Activated CD4-positive, alpha-beta memory T cell treated with anti-CD3 and anti-CD28 coated beads for 36 hours (primary cell): ENCODE measurements at regions of chr2 and their contacts with region 1.

Region 1: DNA sequence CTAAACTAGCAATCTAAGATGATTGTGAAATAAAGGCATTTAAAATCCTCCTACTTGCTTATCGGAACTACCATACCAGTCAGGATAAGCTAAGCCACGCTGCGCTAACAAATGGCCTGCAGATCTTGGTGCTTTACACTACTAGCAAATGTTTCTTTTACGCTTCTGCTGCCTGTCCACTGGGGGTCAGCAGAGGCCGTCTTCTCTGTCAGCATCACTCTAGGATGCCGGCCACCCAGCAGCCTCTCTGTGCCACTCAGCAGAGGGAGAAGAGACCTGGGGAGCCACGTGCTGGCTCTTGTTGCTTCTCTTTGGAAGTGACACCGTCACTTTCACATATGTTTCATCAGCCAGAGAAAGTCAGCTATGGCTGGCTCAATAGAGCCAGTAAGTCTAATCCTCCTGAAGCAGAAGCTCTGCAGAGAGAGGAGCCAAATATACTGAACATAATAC is 36.6 kb downstream of the COPS8 start:
- DNase-seq: peak; percentile 81
- H3K4me3 Mint-ChIP-seq: no peak overlapping the region
- H3K27ac Mint-ChIP-seq: no peak overlapping the region
- H3K4me1 Mint-ChIP-seq: peaks cover 3% of the 10 kb centered on the region
- H3K27me3 Mint-ChIP-seq: no peaks in the 10 kb centered on the region

Region 2: GRCh38 chr2:237085248-237086221 is 36.7 kb before region 1 on chr2 and contains the start of gene COPS8:
- CTCF ChIA-PET with region 1: no interaction called
- POLR2A ChIA-PET with region 1: no interaction called
- intact Hi-C with region 1: no loop called
- DNase-seq: peak; percentile 94
- H3K4me3 Mint-ChIP-seq: peak within 1 kb of the TSS; percentile 98
- H3K27ac Mint-ChIP-seq: peak within 1 kb of the TSS; percentile 92
- H3K4me1 Mint-ChIP-seq: peaks cover 13% of the 10 kb centered on the region
- H3K27me3 Mint-ChIP-seq: no peaks in the 10 kb centered on the region
- total RNA-seq, gene COPS8: 61.1 to 66.8 TPM

Region 3: DNA sequence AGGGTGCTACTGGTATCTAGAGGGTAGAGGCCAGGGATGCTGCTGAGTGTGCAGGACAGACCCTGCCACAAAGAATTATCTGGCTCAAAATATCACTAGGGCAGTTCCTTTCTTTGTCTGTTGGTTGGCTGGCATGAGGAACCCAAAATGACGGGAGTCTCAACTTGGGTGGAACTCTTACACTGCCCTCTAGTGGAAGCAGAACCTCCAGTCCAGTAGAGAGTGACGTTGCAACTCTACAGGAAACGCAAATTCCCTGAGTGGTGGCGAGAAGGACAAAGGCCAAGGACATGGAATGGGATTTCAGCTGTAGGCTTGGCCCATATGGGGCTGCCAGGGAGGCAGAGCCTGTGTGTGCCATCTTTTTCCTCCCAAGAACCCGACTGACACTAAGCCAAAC is 10.6 kb after region 1 on chr2:
- CTCF ChIA-PET with region 1: interaction called, 14 read pairs
- POLR2A ChIA-PET with region 1: no interaction called
- intact Hi-C with region 1: no loop called
- DNase-seq: no peak
- H3K4me3 Mint-ChIP-seq: no peak overlapping the region
- H3K27ac Mint-ChIP-seq: no peak overlapping the region
- H3K4me1 Mint-ChIP-seq: no peaks in the 10 kb centered on the region
- H3K27me3 Mint-ChIP-seq: no peaks in the 10 kb centered on the region

Region 4: DNA sequence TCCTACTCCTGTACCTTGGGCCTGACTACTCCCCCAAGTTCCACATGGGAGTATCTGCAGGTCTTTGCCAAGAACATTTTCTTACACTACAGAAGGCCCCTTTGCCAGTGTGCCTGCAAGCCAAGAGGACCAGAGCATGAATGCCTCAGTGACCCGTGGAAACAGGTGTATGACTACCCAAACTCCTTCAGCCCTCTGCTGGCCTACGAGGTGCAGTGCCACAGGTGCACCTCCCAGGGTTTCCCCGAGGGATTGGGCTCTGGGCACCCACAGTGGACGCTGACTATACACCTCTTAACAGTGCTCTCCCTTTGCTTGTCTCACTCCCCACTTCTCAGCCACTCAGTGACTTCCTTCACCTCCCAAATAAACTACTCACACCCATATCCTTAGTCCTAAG is 200.3 kb after region 1 on chr2:
- CTCF ChIA-PET with region 1: no interaction called
- POLR2A ChIA-PET with region 1: no interaction called
- intact Hi-C with region 1: loop called (anchors 1 kb)
- DNase-seq: peak; percentile 27
- H3K4me3 Mint-ChIP-seq: no peak overlapping the region
- H3K27ac Mint-ChIP-seq: no peak overlapping the region
- H3K4me1 Mint-ChIP-seq: no peaks in the 10 kb centered on the region
- H3K27me3 Mint-ChIP-seq: peaks cover 3% of the 10 kb centered on the region

Region 5: DNA sequence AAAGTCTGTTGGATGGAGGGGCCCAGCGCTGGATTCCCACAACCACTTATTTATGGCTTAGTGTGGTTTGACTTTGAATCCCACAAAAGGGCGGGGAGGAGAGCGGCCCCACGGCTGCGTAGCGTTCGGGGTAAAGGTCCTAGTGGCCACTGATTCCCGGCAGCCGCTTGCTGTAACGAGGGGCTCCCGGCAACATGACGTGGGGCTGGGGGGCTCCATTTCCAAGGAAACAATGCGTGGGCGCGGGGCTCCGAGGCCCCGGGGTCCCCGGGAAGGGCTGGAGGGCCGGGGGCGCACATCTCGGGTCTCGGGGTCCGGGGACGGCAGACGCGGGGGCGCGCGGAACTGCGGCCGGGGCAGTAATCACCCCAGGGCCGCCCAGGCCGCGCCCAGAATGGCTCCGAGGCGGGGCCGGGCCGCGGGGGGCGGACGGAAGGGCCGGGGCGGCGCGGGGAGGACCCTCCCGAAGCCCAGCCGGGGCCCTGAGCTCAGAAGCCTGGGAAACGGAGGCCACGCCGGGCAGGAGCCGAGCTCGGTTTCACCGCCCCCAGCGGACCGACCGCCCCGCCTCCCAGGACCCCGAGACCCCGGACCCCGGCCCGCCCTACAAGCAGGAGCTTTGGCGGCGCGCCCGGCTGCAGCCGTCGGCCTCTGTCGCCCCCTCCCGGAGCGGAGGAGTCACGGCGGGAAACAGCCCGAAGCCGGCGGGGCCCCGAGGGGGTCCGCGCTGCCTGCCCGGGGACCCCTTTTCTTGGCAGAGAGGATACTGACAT is 352.9 kb after region 1 on chr2:
- CTCF ChIA-PET with region 1: interaction called, 12 read pairs
- POLR2A ChIA-PET with region 1: no interaction called
- intact Hi-C with region 1: no loop called
- DNase-seq: peak; percentile 79
- H3K4me3 Mint-ChIP-seq: peak overlapping the region; percentile 68
- H3K27ac Mint-ChIP-seq: peak overlapping the region; percentile 78
- H3K4me1 Mint-ChIP-seq: peaks cover 10% of the 10 kb centered on the region
- H3K27me3 Mint-ChIP-seq: peaks cover 18% of the 10 kb centered on the region